ENCODE measurements at regions of chr18 and their contacts with region 1.

Region 1: DNA sequence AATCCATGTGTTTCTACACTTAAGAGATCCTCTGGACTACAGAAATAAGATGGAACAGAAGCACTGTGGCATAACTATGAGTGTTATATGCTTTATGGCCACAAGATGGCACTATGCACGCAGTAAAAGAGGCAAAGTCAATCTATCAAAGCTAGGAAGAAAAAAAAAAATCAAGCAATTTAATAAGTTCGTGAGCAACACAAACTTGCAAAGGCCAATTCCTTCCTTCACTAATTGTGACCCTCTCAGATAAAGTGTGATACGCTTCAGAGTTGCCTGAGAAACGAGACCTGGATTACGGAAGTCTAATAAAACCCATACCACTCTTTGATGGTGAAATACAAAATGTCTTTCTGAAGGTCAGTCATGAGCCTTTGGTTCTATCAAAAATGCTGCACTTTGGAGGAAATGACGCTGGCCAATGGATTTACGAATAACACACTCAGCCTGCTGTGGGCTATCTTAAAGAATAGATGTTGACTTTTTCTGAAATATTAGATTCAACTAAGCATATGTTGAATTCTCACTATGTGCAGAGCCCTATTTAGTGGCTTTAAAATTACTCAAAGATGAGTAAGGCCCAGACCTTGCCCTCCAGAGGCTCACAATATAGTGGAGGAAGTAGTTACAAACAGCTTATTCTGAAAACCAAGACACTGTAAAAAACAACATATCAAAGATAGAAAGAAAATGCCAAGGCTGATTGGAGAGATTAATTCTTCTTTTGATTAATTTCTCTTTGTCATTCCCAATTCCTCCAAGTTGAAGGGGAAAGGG is 35.5 kb upstream of the TTR start:
- DNase-seq: peak; percentile 44
- H3K4me3 ChIP-seq: peak overlapping the region in 1 of 2 experiments; percentile 22; a peak in 1 of 4 replicates
- H3K27ac ChIP-seq: no peak overlapping the region
- H3K4me1 ChIP-seq: no peaks in the 10 kb centered on the region
- H3K27me3 ChIP-seq: peaks cover 19% of the 10 kb centered on the region; the same call in 1 of the 2 replicates
- CTCF ChIP-seq: peak; percentile 89
- EP300 ChIP-seq: no peak
- RAD21 ChIP-seq: peak; percentile 96

Region 2: DNA sequence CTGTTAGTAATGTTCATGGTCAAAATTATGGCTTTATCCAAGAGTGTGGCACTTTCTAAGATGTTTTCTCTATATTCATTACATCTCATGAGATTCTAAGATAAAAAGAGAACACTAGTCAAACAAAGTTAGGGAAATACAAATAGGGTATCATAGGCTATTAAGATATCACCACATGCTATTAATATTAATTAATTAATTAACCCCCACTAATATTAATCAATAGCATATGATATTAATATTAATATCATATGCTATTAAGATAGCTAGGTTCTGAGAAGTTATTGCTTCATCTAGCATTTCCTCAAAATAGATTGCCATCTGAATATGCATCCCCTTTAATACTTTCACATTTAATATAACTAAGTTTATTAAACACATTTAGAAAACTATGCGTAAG is 86.5 kb before region 1 on chr18:
- CTCF ChIA-PET with region 1: no interaction called
- POLR2A ChIA-PET with region 1: no interaction called
- DNase-seq: no peak
- H3K4me3 ChIP-seq: no peak overlapping the region
- H3K27ac ChIP-seq: no peak overlapping the region
- H3K4me1 ChIP-seq: no peaks in the 10 kb centered on the region
- H3K27me3 ChIP-seq: peaks cover 20% of the 10 kb centered on the region; the same call in 1 of the 2 replicates
- CTCF ChIP-seq: no peak
- EP300 ChIP-seq: no peak
- RAD21 ChIP-seq: no peak

Region 3: DNA sequence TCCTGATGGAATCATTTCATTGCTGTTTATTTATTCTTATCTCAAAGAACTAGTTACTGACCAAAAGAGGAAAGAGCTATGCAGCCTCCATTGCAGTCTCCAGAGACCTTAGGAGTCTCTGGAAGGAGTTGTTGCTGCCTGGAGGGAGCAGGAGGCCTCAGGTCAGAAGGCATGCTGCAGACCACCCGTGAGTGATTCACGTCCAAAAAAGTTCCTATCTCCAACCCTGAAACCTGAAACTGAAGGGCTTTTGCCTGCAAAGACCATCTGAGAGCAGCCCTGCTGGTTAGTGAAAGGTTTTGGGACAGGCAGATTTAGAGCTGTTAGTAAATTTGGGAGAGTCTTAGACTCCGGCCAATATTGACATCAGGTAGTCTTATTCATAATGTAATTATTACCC is 175.5 kb after region 1 on chr18:
- CTCF ChIA-PET with region 1: interaction called, 13 read pairs
- POLR2A ChIA-PET with region 1: no interaction called
- DNase-seq: no peak
- H3K4me3 ChIP-seq: no peak overlapping the region
- H3K27ac ChIP-seq: no peak overlapping the region
- H3K4me1 ChIP-seq: no peaks in the 10 kb centered on the region
- H3K27me3 ChIP-seq: peaks cover 13% of the 10 kb centered on the region; the same call in 1 of the 2 replicates
- CTCF ChIP-seq: no peak
- EP300 ChIP-seq: no peak
- RAD21 ChIP-seq: no peak

Region 4: DNA sequence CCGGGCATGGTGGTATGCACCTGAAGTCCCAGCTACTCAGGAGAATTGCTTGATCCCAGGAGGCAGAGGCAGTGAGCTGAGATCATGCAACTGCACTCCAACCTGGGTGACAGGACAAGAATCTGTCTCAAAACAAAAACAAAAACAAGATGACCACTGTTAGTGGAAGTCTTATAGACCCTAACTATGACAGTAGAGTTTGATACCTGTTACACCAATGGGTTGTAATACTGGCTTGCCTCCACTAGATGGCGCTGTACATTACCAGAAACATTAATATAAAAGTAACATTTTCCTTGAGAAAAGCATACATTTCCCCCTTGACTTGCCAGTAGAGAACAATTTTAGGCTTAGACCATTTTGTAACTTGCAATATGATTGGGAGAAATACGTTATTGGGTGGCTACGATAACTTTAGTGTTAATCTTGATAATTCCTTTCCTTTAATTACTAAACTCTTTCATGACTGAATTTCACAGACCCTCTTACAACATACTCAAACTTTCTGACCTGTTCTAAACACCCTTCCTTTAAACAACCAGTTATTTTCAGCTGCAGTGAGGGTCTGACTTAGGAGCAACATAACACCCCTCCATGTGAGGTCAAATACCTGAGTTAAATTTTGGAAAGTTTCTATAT is 185.1 kb after region 1 on chr18:
- CTCF ChIA-PET with region 1: interaction called, 11 read pairs
- POLR2A ChIA-PET with region 1: no interaction called
- DNase-seq: peak; percentile 32
- H3K4me3 ChIP-seq: peak overlapping the region in 1 of 2 experiments; percentile 36; a peak in 1 of 4 replicates
- H3K27ac ChIP-seq: no peak overlapping the region
- H3K4me1 ChIP-seq: no peaks in the 10 kb centered on the region
- H3K27me3 ChIP-seq: peaks cover 13% of the 10 kb centered on the region; the same call in 1 of the 2 replicates
- CTCF ChIP-seq: peak; percentile 93
- EP300 ChIP-seq: no peak
- RAD21 ChIP-seq: peak; percentile 69

Region 5: GRCh38 chr18:31819106-31819924 is 263.2 kb after region 1 on chr18:
- CTCF ChIA-PET with region 1: interaction called, 21 read pairs
- POLR2A ChIA-PET with region 1: no interaction called
- DNase-seq: peak; percentile 34
- H3K4me3 ChIP-seq: no peak overlapping the region; a peak in 1 of 4 replicates
- H3K27ac ChIP-seq: no peak overlapping the region
- H3K4me1 ChIP-seq: no peaks in the 10 kb centered on the region
- H3K27me3 ChIP-seq: no peaks in the 10 kb centered on the region
- CTCF ChIP-seq: peak; percentile 86
- EP300 ChIP-seq: no peak
- RAD21 ChIP-seq: peak; percentile 79